ENCODE measurements at regions of chr11 and their contacts with region 1.

Region 1: GRCh38 chr11:124644426-124645280 is 22.0 kb downstream of the TBRG1 start:
- DNase-seq: no peak
- H3K4me3 ChIP-seq: no peak overlapping the region; the same call in 1 of the 2 replicates
- H3K27ac ChIP-seq: peak overlapping the region; percentile 40
- H3K27me3 ChIP-seq: no peaks in the 10 kb centered on the region
- CTCF ChIP-seq: peak; percentile 78

Region 2: DNA sequence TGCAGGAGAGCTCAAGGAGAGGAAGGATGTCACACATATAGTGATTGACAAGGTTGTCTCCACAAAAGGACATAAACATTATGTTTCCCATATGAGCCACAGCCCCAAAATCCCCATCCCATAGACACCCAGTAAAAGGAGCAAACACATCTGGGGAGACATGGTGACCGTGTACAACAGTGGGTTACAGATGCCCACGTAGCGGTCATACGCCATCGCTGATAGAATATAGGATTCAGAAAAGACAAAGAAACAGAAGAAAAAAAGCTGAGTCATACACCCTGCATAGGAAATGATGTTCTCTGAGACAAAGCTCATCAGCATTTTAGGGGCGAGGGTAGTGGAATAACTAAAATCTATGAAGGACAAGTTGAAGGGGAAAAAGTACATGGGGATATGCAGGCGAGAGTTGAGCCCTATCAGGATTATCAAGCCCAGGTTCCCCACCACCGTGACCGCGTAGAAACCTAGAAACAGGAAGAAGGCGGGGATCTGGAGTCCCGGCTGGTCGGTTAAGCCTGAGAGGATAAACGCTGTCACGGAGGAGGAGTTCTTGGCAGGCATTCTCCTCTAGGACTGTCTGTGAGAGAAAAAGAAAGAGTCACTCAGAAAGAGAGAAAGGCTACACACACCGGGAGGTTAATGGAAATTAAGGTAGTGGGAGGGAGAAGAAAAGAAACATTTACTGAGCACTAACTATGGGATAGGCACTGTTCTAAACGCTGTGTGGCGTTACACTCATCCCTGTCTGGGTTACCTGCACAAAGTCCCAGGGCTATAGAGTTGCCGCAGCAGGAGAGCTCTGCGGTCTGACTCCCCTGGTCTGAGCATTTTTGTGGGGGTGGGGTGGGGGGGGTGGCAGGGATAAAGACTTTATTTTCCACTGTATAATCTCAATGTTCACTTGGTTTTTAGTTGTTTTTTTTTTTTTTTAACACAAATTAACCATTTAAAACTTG is 163.0 kb before region 1 on chr11:
- CTCF ChIA-PET with region 1: no interaction called
- POLR2A ChIA-PET with region 1: no interaction called
- DNase-seq: peak; percentile 10
- H3K4me3 ChIP-seq: peak overlapping the region; percentile 39
- H3K27ac ChIP-seq: no peak overlapping the region
- H3K27me3 ChIP-seq: no peaks in the 10 kb centered on the region
- CTCF ChIP-seq: no peak

Region 3: GRCh38 chr11:124656774-124657630 is 12.3 kb after region 1 on chr11:
- CTCF ChIA-PET with region 1: interaction called, 37 read pairs
- POLR2A ChIA-PET with region 1: no interaction called
- DNase-seq: no peak
- H3K4me3 ChIP-seq: no peak overlapping the region
- H3K27ac ChIP-seq: no peak overlapping the region
- H3K27me3 ChIP-seq: no peaks in the 10 kb centered on the region
- CTCF ChIP-seq: no peak

Region 4: GRCh38 chr11:124739479-124740276 is 95.0 kb after region 1 on chr11 and contains the start of gene NRGN:
- CTCF ChIA-PET with region 1: interaction called, 16 read pairs
- POLR2A ChIA-PET with region 1: no interaction called
- DNase-seq: peak; percentile 60
- H3K4me3 ChIP-seq: peak within 1 kb of the TSS; percentile 65
- H3K27ac ChIP-seq: no peak within 1 kb of the TSS
- H3K27me3 ChIP-seq: peaks cover 15% of the 10 kb centered on the region
- CTCF ChIP-seq: no peak
- polyA plus RNA-seq, gene NRGN: 3.4 and 4.1 TPM in 2 replicates

Region 5: GRCh38 chr11:124784051-124784450 is 139.4 kb after region 1 on chr11:
- CTCF ChIA-PET with region 1: interaction called, 13 read pairs
- POLR2A ChIA-PET with region 1: no interaction called
- DNase-seq: no peak
- H3K4me3 ChIP-seq: no peak overlapping the region
- H3K27ac ChIP-seq: no peak overlapping the region
- H3K27me3 ChIP-seq: no peaks in the 10 kb centered on the region
- CTCF ChIP-seq: no peak

Region 6: GRCh38 chr11:124812876-124813275 is 168.2 kb after region 1 on chr11:
- CTCF ChIA-PET with region 1: interaction called, 14 read pairs
- POLR2A ChIA-PET with region 1: no interaction called
- DNase-seq: no peak
- H3K4me3 ChIP-seq: no peak overlapping the region
- H3K27ac ChIP-seq: no peak overlapping the region
- H3K27me3 ChIP-seq: peaks cover 6% of the 10 kb centered on the region
- CTCF ChIP-seq: no peak

Region 7: GRCh38 chr11:124875943-124876817 is 231.5 kb after region 1 on chr11:
- CTCF ChIA-PET with region 1: interaction called, 11 read pairs
- POLR2A ChIA-PET with region 1: no interaction called
- DNase-seq: peak; percentile 94
- H3K4me3 ChIP-seq: peak overlapping the region; percentile 73
- H3K27ac ChIP-seq: peak overlapping the region; percentile 97
- H3K27me3 ChIP-seq: peaks cover 21% of the 10 kb centered on the region
- CTCF ChIP-seq: peak; percentile 65